ENCODE measurements at regions of chr14 and their contacts with region 1.

Region 1: GRCh38 chr14:73728717-73729330 is 14.6 kb upstream of the PNMA1 start:
- DNase-seq: peak in 1 of 2 donors; percentile 91
- H3K4me3 ChIP-seq: no peak overlapping the region
- H3K27ac ChIP-seq: peak overlapping the region; percentile 48 to 54
- H3K4me1 ChIP-seq: peaks cover 8 to 30% of the 10 kb centered on the region in 2 donors
- H3K27me3 ChIP-seq: no peaks in the 10 kb centered on the region
- CTCF ChIP-seq: peak; percentile 82 to 95 (median 91)

Region 2: DNA sequence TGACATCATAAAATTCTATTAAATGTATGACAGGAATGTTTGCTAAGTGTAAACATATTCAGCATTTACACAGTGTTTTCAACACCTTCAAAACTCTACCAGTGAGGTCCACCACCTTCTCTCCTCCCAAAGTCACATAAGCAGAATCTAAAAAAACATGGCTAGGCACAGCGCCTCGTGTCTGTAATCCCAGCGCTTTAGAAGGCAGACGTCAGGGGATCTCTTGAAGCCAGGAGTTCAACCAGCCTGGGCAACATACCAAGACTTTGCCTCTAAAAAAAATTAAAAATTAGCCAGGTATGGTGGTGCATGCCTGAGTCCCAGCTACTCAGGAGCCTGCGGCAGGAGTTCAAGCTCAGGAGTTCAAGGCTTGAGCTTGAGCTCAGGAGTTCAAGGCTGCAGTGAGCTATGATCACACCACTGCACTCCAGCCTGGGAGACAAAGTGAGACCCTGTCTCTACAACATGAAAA is 300.4 kb before region 1 on chr14:
- intact Hi-C with region 1: no loop called
- DNase-seq: no peak
- H3K4me3 ChIP-seq: no peak overlapping the region
- H3K27ac ChIP-seq: peak overlapping the region in 1 of 2 donors; percentile 18
- H3K4me1 ChIP-seq: peaks cover 0 to 7% of the 10 kb centered on the region in 2 donors
- H3K27me3 ChIP-seq: no peaks in the 10 kb centered on the region
- CTCF ChIP-seq: no peak

Region 3: GRCh38 chr14:73685328-73685727 is 43.5 kb before region 1 on chr14:
- intact Hi-C with region 1: no loop called
- DNase-seq: no peak
- H3K4me3 ChIP-seq: no peak overlapping the region
- H3K27ac ChIP-seq: no peak overlapping the region
- H3K4me1 ChIP-seq: no peaks in the 10 kb centered on the region
- H3K27me3 ChIP-seq: no peaks in the 10 kb centered on the region
- CTCF ChIP-seq: no peak

Region 4: GRCh38 chr14:73785873-73786695 is 57.3 kb after region 1 on chr14:
- intact Hi-C with region 1: loop called (anchors 2 kb)
- DNase-seq: peak; percentile 43 to 93
- H3K4me3 ChIP-seq: peak overlapping the region; percentile 87 to 89
- H3K27ac ChIP-seq: peak overlapping the region; percentile 98
- H3K4me1 ChIP-seq: peaks cover 37 to 64% of the 10 kb centered on the region in 2 donors
- H3K27me3 ChIP-seq: no peaks in the 10 kb centered on the region
- CTCF ChIP-seq: peak in 2 of 3 experiments; percentile 12 to 49

Region 5: DNA sequence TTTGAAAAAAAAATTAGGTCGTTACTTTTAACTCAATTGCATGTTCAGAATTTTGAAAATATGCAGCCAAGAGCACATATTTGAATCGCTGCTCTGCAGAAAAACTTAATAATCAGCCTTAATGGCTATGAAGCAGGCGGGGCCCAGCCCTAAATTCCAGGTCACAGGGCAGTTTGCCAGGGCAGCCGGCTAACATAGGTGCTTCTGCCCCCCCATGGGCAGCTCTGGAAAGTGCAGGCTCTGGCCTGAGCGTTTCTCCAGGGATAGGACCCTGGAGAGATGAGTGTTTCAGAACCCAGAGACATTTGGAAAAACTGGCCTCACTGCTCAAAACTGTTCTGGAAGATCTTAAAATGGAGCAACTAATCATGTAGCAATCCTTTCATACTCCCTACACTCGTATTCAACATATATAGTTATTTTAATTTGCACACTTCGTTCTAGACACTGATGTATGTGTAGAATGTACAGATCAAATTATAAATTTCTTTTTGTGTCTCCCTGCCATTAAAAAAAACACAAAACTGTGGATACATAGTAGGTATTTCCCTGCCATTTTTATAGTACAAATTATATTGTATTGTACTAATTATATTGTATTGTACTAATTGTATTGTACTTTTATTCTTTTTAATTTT is 96.8 kb after region 1 on chr14:
- intact Hi-C with region 1: loop called (anchors 1 kb)
- DNase-seq: peak; percentile 43 to 95
- H3K4me3 ChIP-seq: no peak overlapping the region
- H3K27ac ChIP-seq: no peak overlapping the region
- H3K4me1 ChIP-seq: peaks cover 0 to 4% of the 10 kb centered on the region in 2 donors
- H3K27me3 ChIP-seq: no peaks in the 10 kb centered on the region
- CTCF ChIP-seq: peak; percentile 84 to 94 (median 89)

Region 6: GRCh38 chr14:73886449-73887317 is 157.9 kb after region 1 on chr14 and contains the start of gene ZNF410:
- intact Hi-C with region 1: loop called (anchors 1 kb)
- DNase-seq: peak; percentile 82 to 98
- H3K4me3 ChIP-seq: peak within 1 kb of the TSS; percentile 80 to 95
- H3K27ac ChIP-seq: peak within 1 kb of the TSS; percentile 96
- H3K4me1 ChIP-seq: peaks cover 10 to 13% of the 10 kb centered on the region in 2 donors
- H3K27me3 ChIP-seq: no peaks in the 10 kb centered on the region
- CTCF ChIP-seq: no peak
- total RNA-seq, gene ZNF410: 33.6 TPM

Region 7: DNA sequence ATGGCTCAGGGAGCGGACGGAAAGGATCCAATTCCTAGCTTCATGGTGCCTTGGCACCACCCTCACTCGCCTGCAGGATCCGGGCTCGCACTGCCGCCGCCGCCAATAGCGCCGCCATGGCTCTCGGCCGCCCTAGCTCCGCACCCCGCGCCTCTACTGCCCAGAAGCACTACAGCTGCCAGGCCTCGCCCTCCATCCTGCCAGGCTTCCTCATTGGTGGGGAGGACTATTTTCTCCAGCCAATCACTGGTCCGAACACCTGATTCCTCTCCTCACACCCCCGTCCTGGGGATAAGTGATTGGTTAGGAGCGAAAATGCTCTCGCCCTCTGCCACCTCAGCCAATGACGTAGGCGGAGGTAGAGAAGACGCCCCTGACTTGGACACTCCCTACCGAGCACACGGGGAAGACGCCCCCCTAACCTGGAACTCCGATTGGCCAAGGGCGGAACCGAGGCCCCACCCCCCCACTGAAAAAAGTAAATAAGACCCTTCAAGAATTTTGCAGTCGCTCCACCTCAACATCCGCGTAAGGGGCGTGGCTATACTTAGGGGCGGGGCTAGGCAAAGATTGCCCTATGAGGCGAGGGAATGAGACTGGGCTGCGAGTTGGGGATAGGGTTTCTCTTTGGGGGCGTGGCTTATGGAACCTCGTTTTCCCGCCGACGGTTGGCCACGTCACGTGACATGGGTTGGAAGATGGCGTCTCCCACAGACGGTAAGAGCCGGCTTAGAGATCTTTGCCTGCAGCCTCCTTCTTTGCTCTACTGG is 355.6 kb after region 1 on chr14 and contains the starts of genes ALDH6A1 and LIN52:
- intact Hi-C with region 1: loop called (anchors 10 kb)
- DNase-seq: peak; percentile 100
- H3K4me3 ChIP-seq: peak within 1 kb of the TSS; percentile 68 to 96
- H3K27ac ChIP-seq: peak within 1 kb of the TSS; percentile 81 to 92
- H3K4me1 ChIP-seq: peaks cover 0 to 16% of the 10 kb centered on the region in 2 donors
- H3K27me3 ChIP-seq: no peaks in the 10 kb centered on the region
- CTCF ChIP-seq: no peak
- total RNA-seq, gene ALDH6A1: 4.9 TPM
- total RNA-seq, gene LIN52: 1.1 TPM

Measured in ascending aorta (tissue), 2 donors.